K562 (cell line): ENCODE measurements at regions of chr4 and their contacts with region 1.

Region 1: DNA sequence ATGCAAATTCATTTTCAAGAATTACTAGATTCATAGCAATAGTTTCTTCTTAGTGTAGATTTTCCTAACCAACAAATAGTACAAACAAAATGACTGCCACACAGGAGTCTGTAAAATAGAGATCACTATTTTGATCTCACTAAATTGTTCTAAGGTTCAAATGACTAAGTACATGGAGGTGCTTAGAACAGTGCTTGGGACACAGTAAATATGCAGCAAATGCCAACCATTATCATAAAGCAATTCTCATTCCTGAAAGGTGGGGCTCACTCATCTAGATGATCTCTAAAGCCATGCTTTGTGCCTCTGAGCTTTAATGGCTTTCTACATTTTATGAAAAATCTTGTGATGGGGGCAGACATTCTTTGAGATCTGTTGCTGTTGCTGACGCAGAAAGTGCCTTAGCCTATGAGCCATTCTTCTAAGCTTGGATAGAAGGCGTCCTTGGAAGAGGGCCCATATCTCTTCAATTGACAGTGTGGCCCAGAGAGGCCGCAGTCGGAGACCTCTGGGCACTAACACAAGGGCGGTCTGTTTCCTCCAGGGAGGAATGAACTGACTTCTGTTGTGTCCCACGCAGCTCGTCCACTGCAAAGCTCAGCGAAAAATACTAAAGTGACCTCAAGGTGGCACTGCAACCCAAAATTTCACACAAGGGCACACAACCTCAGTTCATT is 23.5 kb downstream of the TLR10 start:
- DNase-seq: peak; percentile 48 to 71 (median 60)
- ATAC-seq: peak; percentile 94
- H3K4me3 ChIP-seq: no peak overlapping the region
- H3K27ac ChIP-seq: no peak overlapping the region
- H3K4me1 ChIP-seq: no peaks in the 10 kb centered on the region; a peak in 2 of 5 replicates
- H3K27me3 ChIP-seq: peaks cover 6 to 24% of the 10 kb centered on the region in 2 experiments
- CTCF ChIP-seq: peak; percentile 70 to 84 (median 74)
- EP300 ChIP-seq: no peak
- POLR2A ChIP-seq: no peak
- RAD21 ChIP-seq: peak; percentile 76 to 87

Region 2: GRCh38 chr4:38804654-38805295 is 45.5 kb after region 1 on chr4 and contains the start of gene TLR1:
- CTCF ChIA-PET with region 1: no interaction called
- POLR2A ChIA-PET with region 1: no interaction called
- in situ Hi-C with region 1: no loop called
- intact Hi-C with region 1: loop called (anchors 5 kb)
- DNase-seq: peak in 1 of 4 experiments; percentile 46
- ATAC-seq: peak; percentile 79
- H3K4me3 ChIP-seq: no peak within 1 kb of the TSS
- H3K27ac ChIP-seq: no peak within 1 kb of the TSS
- H3K4me1 ChIP-seq: no peaks in the 10 kb centered on the region
- H3K27me3 ChIP-seq: no peaks in the 10 kb centered on the region
- CTCF ChIP-seq: peak in 2 of 3 experiments; percentile 40 to 65; a peak in 3 of 6 replicates
- EP300 ChIP-seq: no peak
- POLR2A ChIP-seq: no peak
- RAD21 ChIP-seq: peak in 1 of 2 experiments; percentile 55; a peak in 3 of 4 replicates
- polyA plus RNA-seq, gene TLR1: 0.22 to 0.49 TPM

Region 3: GRCh38 chr4:38856524-38857337 is 97.5 kb after region 1 on chr4 and contains the start of gene TLR6:
- CTCF ChIA-PET with region 1: interaction called, 11 read pairs
- POLR2A ChIA-PET with region 1: no interaction called
- in situ Hi-C with region 1: no loop called
- intact Hi-C with region 1: loop called (anchors 2 kb)
- DNase-seq: peak; percentile 51 to 89 (median 60)
- ATAC-seq: peak; percentile 78
- H3K4me3 ChIP-seq: peak within 1 kb of the TSS; percentile 20; the same call in 1 of the 2 replicates
- H3K27ac ChIP-seq: peak within 1 kb of the TSS; percentile 54
- H3K4me1 ChIP-seq: peaks cover 0 to 20% of the 10 kb centered on the region in 2 experiments; a peak in 3 of 5 replicates
- H3K27me3 ChIP-seq: no peaks in the 10 kb centered on the region; a peak in 1 of 5 replicates
- CTCF ChIP-seq: peak; percentile 66 to 87 (median 73)
- EP300 ChIP-seq: 0 out of 2 replicates have a peak, but pooled peaks have one; percentile 34
- POLR2A ChIP-seq: no peak
- RAD21 ChIP-seq: peak; percentile 70 to 76
- polyA plus RNA-seq, gene TLR6: 0.08 to 0.45 TPM

Region 4: GRCh38 chr4:38894340-38894982 is 135.2 kb after region 1 on chr4:
- CTCF ChIA-PET with region 1: no interaction called
- POLR2A ChIA-PET with region 1: no interaction called
- in situ Hi-C with region 1: no loop called
- intact Hi-C with region 1: loop called (anchors 5 kb)
- DNase-seq: no peak
- ATAC-seq: no peak
- H3K4me3 ChIP-seq: no peak overlapping the region
- H3K27ac ChIP-seq: no peak overlapping the region
- H3K4me1 ChIP-seq: no peaks in the 10 kb centered on the region
- H3K27me3 ChIP-seq: no peaks in the 10 kb centered on the region
- CTCF ChIP-seq: 0 out of 6 replicates have a peak, but pooled peaks of 2 of the 3 experiments have one; percentile 2
- EP300 ChIP-seq: no peak
- POLR2A ChIP-seq: no peak
- RAD21 ChIP-seq: no peak

Region 5: DNA sequence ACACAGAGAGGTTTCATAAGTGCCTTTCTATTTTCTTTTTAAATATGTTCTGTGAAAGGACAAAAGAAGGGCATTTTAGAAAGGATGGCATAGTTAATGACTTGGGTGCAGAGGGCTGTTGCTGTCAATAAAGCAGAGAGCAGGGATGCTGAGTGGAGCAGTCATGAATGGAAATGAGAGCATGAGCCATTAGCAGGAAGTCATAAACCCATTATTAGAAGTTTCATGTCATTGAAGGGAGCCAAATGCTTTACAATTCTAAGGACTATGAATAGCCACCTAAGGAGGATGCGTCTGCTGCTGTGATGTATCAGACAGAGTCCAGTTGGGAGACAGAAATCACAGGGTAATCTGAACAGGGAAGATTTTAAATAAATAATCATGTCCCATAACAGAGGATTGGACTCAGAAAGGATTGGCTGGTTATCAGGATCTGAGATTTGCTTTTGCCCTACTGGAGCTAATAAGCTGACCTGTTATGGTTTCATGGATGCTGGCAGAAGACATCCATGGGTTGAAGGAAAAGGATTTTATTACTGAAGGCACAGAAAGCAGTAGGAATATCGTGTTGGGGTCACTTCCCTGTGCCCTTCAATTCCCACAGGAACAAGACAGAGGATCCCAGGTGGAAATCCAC is 375.6 kb after region 1 on chr4:
- CTCF ChIA-PET with region 1: interaction called, 9 read pairs
- POLR2A ChIA-PET with region 1: no interaction called
- in situ Hi-C with region 1: no loop called
- intact Hi-C with region 1: loop called (anchors 1 kb)
- DNase-seq: no peak
- ATAC-seq: no peak
- H3K4me3 ChIP-seq: no peak overlapping the region
- H3K27ac ChIP-seq: no peak overlapping the region
- H3K4me1 ChIP-seq: peaks cover 0 to 2% of the 10 kb centered on the region in 2 experiments; a peak in 1 of 5 replicates
- H3K27me3 ChIP-seq: no peaks in the 10 kb centered on the region
- CTCF ChIP-seq: no peak
- EP300 ChIP-seq: no peak
- POLR2A ChIP-seq: no peak
- RAD21 ChIP-seq: no peak